ENCODE measurements at regions of chr17 and their contacts with region 1.

Region 1: DNA sequence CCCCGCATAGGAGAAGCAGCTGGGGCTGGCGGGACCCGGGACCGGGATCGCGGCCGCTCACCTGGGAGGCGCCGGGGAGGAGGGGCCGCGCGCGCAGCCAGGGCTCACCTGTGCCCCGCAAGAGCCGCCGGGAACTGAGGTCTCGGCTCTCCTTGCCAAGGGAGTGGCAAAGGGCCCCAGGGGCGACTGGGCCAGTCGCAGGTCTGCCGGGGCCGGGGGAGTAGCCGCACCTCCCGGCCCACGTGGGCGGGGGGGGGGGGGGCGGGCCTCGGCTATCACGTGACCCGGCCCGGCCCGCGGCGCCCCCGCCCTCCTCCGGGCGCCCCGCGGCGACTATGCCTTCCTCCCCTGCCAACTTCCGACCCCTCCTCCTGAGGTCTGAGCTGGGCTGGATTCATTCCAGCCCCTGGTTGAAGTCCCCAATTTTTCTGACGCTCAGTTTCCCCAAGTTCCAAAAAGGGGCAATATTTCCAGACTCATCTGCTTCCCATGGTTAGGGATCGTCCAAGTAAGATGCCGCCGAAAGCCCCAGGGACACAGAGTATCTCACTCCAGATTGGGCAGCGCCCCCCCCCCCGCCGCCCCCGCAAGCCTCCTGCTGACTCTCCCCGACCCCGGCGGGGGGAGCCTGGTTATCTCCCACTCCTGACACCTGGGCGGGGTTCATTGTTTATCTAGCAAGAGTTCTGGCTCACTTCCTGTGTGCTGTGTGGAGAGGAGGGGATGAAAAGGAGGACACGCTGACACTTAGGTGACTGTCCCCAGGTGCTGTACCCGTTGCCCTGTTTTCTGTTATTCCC is at the start of gene TMC6:
- DNase-seq: peak; percentile 91
- H3K4me3 ChIP-seq: peak within 1 kb of the TSS; percentile 58
- H3K4me3 Mint-ChIP-seq: peak within 1 kb of the TSS; percentile 75
- H3K27ac Mint-ChIP-seq: peak within 1 kb of the TSS; percentile 75
- H3K4me1 ChIP-seq: peaks cover 23% of the 10 kb centered on the region
- H3K4me1 Mint-ChIP-seq: peaks cover 9% of the 10 kb centered on the region
- H3K27me3 ChIP-seq: no peaks in the 10 kb centered on the region
- H3K27me3 Mint-ChIP-seq: no peaks in the 10 kb centered on the region
- CTCF ChIP-seq: no peak
- total RNA-seq, gene TMC6: 77.7 and 84.7 TPM in 2 replicates

Region 2: DNA sequence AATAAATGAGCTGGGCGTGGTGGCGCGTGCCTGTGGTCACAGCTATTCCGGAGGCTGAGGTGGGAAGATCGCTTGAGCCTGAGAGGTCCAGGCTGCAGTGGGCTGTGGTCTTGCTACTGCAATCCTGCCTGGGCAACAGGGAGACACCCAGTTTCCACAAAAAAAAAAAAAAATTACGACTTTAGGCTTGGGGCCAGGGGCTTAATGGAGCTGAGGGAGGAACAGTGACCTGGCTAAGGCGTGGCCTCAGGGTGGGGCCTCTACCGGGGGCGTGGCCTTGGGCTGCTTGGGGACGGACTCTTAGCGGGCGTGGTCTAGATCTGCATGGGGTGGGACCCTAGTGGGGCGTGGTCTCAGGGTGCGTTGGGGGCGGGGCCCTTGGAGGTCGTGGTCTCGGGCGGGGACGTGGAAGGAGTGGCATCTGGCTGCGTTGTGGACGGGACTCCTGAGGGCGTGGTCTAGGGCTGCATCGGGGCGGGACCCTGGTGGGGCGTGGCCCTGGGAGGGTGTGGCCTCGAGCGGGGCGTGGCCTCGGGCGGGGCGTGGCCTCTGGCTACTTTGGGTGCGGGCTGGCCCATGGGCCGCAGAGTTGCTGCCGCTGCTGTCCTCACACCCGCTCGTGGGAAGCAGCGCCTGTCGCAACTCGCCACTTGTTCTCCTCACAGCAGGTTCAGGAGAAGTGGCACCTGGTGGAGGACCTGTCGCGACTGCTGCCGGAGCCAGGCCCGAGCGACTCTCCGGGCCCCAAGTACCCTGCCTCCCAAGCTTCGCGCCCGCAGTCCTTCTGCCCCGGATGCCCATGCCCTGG is 11.6 kb after region 1 on chr17:
- CTCF ChIA-PET with region 1: interaction called, 12 read pairs
- POLR2A ChIA-PET with region 1: no interaction called
- intact Hi-C with region 1: no loop called
- DNase-seq: peak; percentile 93 to 98
- H3K4me3 ChIP-seq: no peak overlapping the region
- H3K4me3 Mint-ChIP-seq: no peak overlapping the region
- H3K27ac Mint-ChIP-seq: peak overlapping the region; percentile 83
- H3K4me1 ChIP-seq: peaks cover 30% of the 10 kb centered on the region
- H3K4me1 Mint-ChIP-seq: peaks cover 5% of the 10 kb centered on the region
- H3K27me3 ChIP-seq: no peaks in the 10 kb centered on the region
- H3K27me3 Mint-ChIP-seq: no peaks in the 10 kb centered on the region
- CTCF ChIP-seq: no peak

Region 3: GRCh38 chr17:78154903-78155811 is 26.4 kb after region 1 on chr17:
- CTCF ChIA-PET with region 1: no interaction called
- POLR2A ChIA-PET with region 1: no interaction called
- intact Hi-C with region 1: loop called (anchors 2 kb)
- DNase-seq: no peak
- H3K4me3 ChIP-seq: no peak overlapping the region
- H3K4me3 Mint-ChIP-seq: no peak overlapping the region
- H3K27ac Mint-ChIP-seq: no peak overlapping the region
- H3K4me1 ChIP-seq: peaks cover 25% of the 10 kb centered on the region
- H3K4me1 Mint-ChIP-seq: peaks cover 11% of the 10 kb centered on the region
- H3K27me3 ChIP-seq: no peaks in the 10 kb centered on the region
- H3K27me3 Mint-ChIP-seq: no peaks in the 10 kb centered on the region
- CTCF ChIP-seq: no peak

Region 4: DNA sequence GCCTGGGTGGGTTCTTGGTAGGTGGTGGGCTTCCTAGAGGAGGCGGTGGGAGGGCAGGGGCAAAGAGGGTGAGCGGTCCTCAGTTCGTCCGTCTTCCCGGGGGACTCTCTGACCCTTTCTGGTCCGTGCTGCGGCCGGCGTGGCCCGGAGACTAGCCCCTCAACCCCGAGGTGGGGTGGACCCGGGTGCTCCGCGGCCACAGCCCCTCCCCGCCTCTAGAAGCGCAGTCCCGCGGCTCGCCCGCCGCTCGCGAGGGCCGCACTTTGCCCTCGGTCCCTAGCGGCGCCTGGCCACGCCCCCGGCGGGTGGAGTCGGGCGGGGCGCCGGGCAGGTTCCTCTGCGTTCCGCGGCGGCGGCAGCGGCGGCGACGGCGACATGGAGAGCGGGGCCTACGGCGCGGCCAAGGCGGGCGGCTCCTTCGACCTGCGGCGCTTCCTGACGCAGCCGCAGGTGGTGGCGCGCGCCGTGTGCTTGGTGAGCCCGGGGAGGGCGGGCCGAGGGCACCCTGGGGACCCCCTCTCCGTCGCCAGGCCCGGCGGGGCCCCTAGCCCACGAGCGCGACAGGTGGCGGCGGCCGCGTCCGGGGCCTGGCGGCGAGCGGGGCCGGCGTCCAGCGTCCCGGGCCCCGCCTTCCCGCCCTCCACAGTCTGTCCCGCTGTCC is 39.6 kb after region 1 on chr17 and contains the start of gene SYNGR2:
- CTCF ChIA-PET with region 1: interaction called, 9 read pairs
- POLR2A ChIA-PET with region 1: interaction called, 11 read pairs
- intact Hi-C with region 1: loop called (anchors 5 kb)
- DNase-seq: peak; percentile 87 to 97
- H3K4me3 ChIP-seq: peak within 1 kb of the TSS; percentile 95
- H3K4me3 Mint-ChIP-seq: peak within 1 kb of the TSS; percentile 76
- H3K27ac Mint-ChIP-seq: peak within 1 kb of the TSS; percentile 77
- H3K4me1 ChIP-seq: peaks cover 20% of the 10 kb centered on the region
- H3K4me1 Mint-ChIP-seq: peaks cover 14% of the 10 kb centered on the region
- H3K27me3 ChIP-seq: no peaks in the 10 kb centered on the region
- H3K27me3 Mint-ChIP-seq: no peaks in the 10 kb centered on the region
- CTCF ChIP-seq: no peak
- total RNA-seq, gene SYNGR2: 169 and 193 TPM in 2 replicates

Measured in Caco-2 (cell line).